Heart left ventricle (tissue), 16 donors: ENCODE measurements at regions of chr4 and their contacts with region 1.

Region 1: GRCh38 chr4:38768968-38769394 is 13.8 kb downstream of the TLR10 start:
- DNase-seq: no peak
- ATAC-seq: peak in 3 of 4 donors; percentile 49 to 72 (median 64)
- H3K4me3 ChIP-seq: no peak overlapping the region
- H3K27ac ChIP-seq: peak overlapping the region in 3 of 12 donors; percentile 4 to 72 (median 30)
- H3K4me1 ChIP-seq: peaks cover 0 to 21% (median 0%) of the 10 kb centered on the region in 12 donors
- H3K27me3 ChIP-seq: no peaks in the 10 kb centered on the region
- CTCF ChIP-seq: no peak
- POLR2A ChIP-seq: no peak

Region 2: GRCh38 chr4:38842994-38843393 is 74.0 kb after region 1 on chr4:
- intact Hi-C with region 1: loop called in 1 of 10 experiments (anchors 10 kb)
- DNase-seq: no peak
- ATAC-seq: no peak
- H3K4me3 ChIP-seq: no peak overlapping the region
- H3K27ac ChIP-seq: no peak overlapping the region
- H3K4me1 ChIP-seq: peaks cover 0 to 6% (median 0%) of the 10 kb centered on the region in 12 donors
- H3K27me3 ChIP-seq: no peaks in the 10 kb centered on the region
- CTCF ChIP-seq: no peak
- POLR2A ChIP-seq: no peak

Region 3: DNA sequence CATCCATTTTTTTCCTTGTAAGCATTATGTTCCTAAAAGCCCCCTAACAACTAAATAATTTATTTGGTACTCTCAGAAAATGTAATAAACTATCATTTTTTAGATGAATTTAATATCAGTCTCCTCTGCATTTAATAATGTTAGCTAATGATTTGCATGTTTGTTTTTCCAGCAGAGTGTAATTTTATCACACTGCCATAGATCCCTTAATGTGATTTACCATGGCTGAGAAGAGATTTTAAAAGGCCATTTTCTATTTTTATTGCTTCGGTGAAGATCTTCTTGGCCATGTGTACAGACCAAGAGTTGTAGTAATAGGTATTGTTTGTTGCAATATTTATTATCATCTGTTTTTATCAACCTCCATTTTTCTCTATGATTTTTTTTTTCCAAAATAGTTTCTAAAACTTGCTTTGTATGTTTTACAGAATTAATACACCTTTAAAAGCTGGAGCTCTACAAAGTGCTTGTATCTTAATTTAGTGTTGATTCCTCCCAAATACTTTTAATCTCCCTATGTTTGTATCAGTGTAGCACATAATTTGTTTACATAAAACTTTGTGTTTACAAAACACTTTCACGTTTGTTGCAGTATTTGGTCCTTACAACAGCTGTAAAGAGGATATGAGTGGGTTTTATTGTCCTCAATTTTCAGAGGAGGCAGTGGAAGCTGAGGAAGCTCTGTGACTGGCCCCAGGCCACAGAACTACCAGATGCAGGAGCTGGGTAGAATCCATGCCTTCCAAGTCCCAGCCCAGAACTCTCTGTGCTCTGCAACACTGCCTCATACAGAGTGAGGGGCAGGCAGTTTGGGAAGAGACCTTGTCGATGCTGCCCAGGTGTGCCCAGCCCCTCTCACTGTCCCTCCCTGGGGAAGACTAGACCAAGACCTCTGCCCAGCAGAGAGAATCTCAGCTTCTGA is 156.8 kb after region 1 on chr4:
- intact Hi-C with region 1: no loop called
- DNase-seq: no peak
- ATAC-seq: peak in 1 of 4 donors; percentile 50
- H3K4me3 ChIP-seq: no peak overlapping the region
- H3K27ac ChIP-seq: peak overlapping the region in 1 of 12 donors; percentile 74
- H3K4me1 ChIP-seq: peaks cover 0 to 4% (median 0%) of the 10 kb centered on the region in 12 donors
- H3K27me3 ChIP-seq: no peaks in the 10 kb centered on the region
- CTCF ChIP-seq: no peak
- POLR2A ChIP-seq: no peak